Mammary epithelial cell (primary cell): ENCODE measurements at regions of chr21 and their contacts with region 1.

Region 1: GRCh38 chr21:37916310-37917051 is at the start of gene KCNJ6:
- DNase-seq: peak; percentile 37
- H3K4me3 ChIP-seq: no peak within 1 kb of the TSS
- H3K27ac ChIP-seq: no peak within 1 kb of the TSS
- H3K4me1 ChIP-seq: no peaks in the 10 kb centered on the region
- H3K27me3 ChIP-seq: peaks cover 20% of the 10 kb centered on the region
- CTCF ChIP-seq: peak in 1 of 2 donors; percentile 47
- total RNA-seq, gene KCNJ6: not detected

Region 2: DNA sequence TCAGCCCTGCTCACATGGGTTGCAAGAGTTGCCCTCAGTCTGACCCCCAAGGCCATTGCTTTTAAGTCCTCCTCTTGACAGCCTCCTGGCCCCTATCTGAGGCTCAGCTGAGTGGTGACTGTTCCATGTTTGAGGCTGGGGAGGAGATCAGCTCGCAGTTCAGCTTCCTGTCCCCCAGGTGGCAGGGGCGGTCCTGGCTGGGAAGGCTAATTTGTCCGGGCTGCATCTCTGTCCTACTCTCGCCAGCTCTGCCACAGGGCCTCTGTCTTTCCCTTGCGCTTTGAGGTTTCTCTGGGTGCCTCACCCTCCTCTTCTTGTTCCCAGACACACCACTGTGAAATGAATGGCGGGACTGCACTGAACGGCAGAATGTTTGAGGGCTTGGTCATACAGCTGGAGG is 157.5 kb before region 1 on chr21:
- CTCF ChIA-PET with region 1: no interaction called
- dilution Hi-C with region 1: no loop called
- in situ Hi-C with region 1: no loop called
- intact Hi-C with region 1: loop called (anchors 1 kb)
- DNase-seq: peak; percentile 37
- H3K4me3 ChIP-seq: no peak overlapping the region
- H3K27ac ChIP-seq: no peak overlapping the region
- H3K4me1 ChIP-seq: no peaks in the 10 kb centered on the region
- H3K27me3 ChIP-seq: peaks cover 3% of the 10 kb centered on the region
- CTCF ChIP-seq: peak; percentile 40 to 72

Region 3: DNA sequence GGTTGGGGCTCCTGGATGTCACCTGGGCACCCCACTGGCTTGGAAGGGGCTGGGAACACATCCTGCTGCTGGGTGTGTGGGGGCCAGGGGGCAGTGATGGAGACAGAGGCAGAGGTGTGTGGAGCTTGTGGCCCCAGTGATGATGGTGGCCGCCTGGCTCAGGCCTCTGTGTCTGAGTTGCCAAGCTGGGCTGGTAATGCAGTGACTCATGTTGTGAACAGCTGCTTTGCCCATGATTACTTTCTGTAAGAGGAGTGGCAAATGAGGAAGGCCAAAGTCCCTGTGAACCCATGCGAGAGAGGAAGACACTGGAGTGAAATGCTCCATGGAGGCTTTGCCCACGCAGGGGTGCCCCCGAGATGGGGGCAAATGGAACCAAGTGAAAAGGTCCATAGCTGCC is 87.0 kb before region 1 on chr21:
- CTCF ChIA-PET with region 1: no interaction called
- dilution Hi-C with region 1: no loop called
- in situ Hi-C with region 1: no loop called
- intact Hi-C with region 1: loop called (anchors 10 kb)
- DNase-seq: peak; percentile 55
- H3K4me3 ChIP-seq: no peak overlapping the region
- H3K27ac ChIP-seq: no peak overlapping the region
- H3K4me1 ChIP-seq: no peaks in the 10 kb centered on the region
- H3K27me3 ChIP-seq: no peaks in the 10 kb centered on the region
- CTCF ChIP-seq: no peak

Region 4: DNA sequence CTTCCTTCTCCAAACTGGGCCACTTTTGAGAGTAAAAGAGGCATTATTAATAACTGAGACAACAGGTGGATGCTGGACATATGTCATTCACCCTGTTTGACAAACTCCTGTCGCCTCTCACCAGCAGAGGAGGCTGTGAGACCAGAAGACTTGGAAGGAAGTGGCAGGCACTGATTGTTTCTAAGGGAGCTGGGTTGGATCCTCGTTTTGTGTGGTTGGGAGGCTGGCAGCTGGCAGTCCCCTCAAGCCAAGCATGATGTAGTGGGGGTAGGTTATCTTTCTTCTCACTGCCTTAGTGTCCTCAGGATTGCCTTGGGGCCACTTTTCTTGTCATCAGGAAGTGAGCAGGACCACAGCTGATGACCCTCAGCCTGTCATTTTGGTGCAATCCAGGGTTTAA is 253.8 kb after region 1 on chr21:
- CTCF ChIA-PET with region 1: no interaction called
- dilution Hi-C with region 1: no loop called
- in situ Hi-C with region 1: no loop called
- intact Hi-C with region 1: loop called (anchors 2 kb)
- DNase-seq: peak; percentile 43
- H3K4me3 ChIP-seq: no peak overlapping the region
- H3K27ac ChIP-seq: no peak overlapping the region
- H3K4me1 ChIP-seq: peaks cover 9% of the 10 kb centered on the region
- H3K27me3 ChIP-seq: no peaks in the 10 kb centered on the region
- CTCF ChIP-seq: peak; percentile 73 to 79